ENCODE measurements at regions of chr11 and their contacts with region 1.

Region 1: DNA sequence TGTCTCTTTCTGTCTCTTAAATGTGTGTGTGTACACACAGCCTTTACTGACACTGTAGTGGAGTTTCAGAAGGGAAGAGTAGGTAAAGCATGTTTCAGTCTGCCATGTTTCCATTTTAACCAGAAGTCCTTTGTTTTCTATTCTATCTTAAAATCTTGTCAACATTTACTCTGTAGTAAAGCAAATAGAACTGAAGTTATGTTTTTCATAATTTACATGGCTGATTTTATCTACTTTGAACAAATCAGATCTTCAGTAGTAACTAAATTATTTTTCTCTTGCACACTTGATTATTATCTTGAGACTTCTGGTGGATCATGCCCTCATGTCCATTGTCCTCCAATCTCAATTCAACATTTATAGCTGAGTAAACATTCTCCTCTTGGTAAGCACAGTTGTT is 13.4 kb upstream of the DEUP1 start:
- DNase-seq: no peak
- H3K4me3 ChIP-seq: no peak overlapping the region
- H3K27ac ChIP-seq: peak overlapping the region; percentile 2 to 33
- H3K4me1 ChIP-seq: no peaks in the 10 kb centered on the region
- H3K27me3 ChIP-seq: no peaks in the 10 kb centered on the region
- CTCF ChIP-seq: no peak
- POLR2A ChIP-seq: no peak

Region 2: GRCh38 chr11:93370260-93370659 is 53.1 kb after region 1 on chr11:
- intact Hi-C with region 1: loop called (anchors 10 kb)
- DNase-seq: no peak
- H3K4me3 ChIP-seq: no peak overlapping the region
- H3K27ac ChIP-seq: no peak overlapping the region
- H3K4me1 ChIP-seq: no peaks in the 10 kb centered on the region
- H3K27me3 ChIP-seq: no peaks in the 10 kb centered on the region
- CTCF ChIP-seq: no peak
- POLR2A ChIP-seq: no peak